GM13976 (cell line): ENCODE measurements at regions of chr1 and their contacts with region 1.

Region 1: GRCh38 chr1:85116856-85117255 is 68.6 kb upstream of the MCOLN3 start:
- DNase-seq: no peak
- CTCF ChIP-seq: no peak

Region 2: GRCh38 chr1:85048296-85049064 is 68.4 kb before region 1 on chr1 and contains the start of gene MCOLN3:
- in situ Hi-C with region 1: no loop called
- DNase-seq: peak; percentile 72
- CTCF ChIP-seq: no peak

Region 3: DNA sequence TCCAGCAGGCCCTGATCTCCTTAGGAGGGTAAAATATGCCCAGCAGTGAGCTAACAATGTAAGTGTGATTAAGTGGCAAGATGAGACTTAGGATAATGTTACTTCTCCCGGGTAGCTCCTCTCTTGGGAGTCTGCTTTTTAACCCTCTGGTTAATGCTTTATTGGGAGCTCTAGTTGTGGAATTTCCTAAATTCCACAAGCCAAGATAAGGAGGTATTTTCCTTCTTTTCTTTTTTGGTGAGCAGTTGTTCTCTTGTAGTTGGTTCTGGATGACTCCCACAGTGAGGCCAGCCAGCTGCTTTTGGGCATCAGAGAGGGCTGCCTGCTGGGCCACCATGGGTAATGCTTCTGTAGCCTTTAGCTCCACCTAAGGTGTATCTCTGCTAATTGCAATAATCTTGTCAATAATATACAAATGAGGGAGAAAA is 123.3 kb after region 1 on chr1:
- in situ Hi-C with region 1: loop called (anchors 10 kb)
- DNase-seq: peak; percentile 44
- CTCF ChIP-seq: peak; percentile 22